BJ (cell line): ENCODE measurements at regions of chr12 and their contacts with region 1.

Region 1: GRCh38 chr12:54379401-54380201 is 4.9 kb downstream of the ZNF385A start:
- DNase-seq: no peak
- H3K4me3 ChIP-seq: peak overlapping the region; percentile 43
- H3K27me3 ChIP-seq: no peaks in the 10 kb centered on the region
- CTCF ChIP-seq: peak; percentile 100

Region 2: GRCh38 chr12:54220092-54220557 is 159.5 kb before region 1 on chr12:
- CTCF ChIA-PET with region 1: interaction called, 37 read pairs
- POLR2A ChIA-PET with region 1: no interaction called
- DNase-seq: peak; percentile 32
- H3K4me3 ChIP-seq: no peak overlapping the region
- H3K27me3 ChIP-seq: no peaks in the 10 kb centered on the region; the same call in 1 of the 2 replicates
- CTCF ChIP-seq: peak; percentile 88

Region 3: GRCh38 chr12:54337280-54337842 is 42.2 kb before region 1 on chr12:
- CTCF ChIA-PET with region 1: interaction called, 19 read pairs
- POLR2A ChIA-PET with region 1: no interaction called
- DNase-seq: no peak
- H3K4me3 ChIP-seq: no peak overlapping the region
- H3K27me3 ChIP-seq: no peaks in the 10 kb centered on the region
- CTCF ChIP-seq: peak; percentile 31; the same call in 1 of the 2 replicates

Region 4: DNA sequence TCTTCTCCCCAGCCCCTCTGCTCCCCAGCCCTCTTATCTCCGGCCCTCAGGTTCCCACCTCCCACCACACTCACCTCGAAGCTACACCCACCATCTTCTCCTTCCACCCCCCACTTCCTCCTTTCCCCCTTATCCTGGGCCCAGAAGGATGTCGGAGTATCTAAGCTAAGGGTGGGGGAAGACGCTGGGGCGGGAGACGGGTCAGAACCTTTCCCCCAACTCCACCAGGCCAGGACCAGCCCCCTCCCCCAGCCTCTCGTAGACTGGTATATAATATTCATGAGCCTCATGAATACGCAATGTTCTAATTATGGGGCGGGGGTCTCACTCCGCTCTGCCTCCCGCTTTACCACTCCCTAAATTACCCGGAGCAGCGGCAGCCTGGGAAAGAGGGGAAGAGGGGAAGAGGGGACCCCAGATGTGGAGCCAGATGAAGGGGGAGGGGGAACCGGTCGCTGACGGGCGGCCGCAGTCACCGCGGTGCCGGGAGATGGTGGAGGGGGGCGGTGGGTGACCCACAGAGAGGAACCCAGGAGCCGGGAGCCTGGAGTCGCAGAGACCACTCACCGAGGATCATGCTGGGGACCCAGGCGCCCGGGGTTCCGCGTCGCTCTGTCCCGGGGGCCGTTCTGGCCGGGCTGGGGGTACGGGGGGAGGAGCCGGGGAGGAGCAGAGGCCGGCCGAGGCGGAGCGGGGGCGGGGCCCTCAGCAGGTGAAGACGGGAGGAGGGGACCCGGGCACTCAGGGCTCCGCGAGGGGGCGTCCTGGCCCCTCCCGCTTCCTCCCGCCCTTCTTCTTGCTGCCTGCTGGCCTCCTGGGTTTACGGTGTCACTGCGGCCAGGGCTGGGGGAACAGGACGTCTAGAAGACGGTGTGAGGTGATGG is 11.3 kb after region 1 on chr12:
- CTCF ChIA-PET with region 1: interaction called, 53 read pairs
- POLR2A ChIA-PET with region 1: no interaction called
- DNase-seq: no peak
- H3K4me3 ChIP-seq: no peak overlapping the region
- H3K27me3 ChIP-seq: no peaks in the 10 kb centered on the region
- CTCF ChIP-seq: 0 out of 2 replicates have a peak, but pooled peaks have one; percentile 13

Region 5: GRCh38 chr12:54419088-54419892 is 39.7 kb after region 1 on chr12 and contains the start of gene ITGA5:
- CTCF ChIA-PET with region 1: interaction called, 20 read pairs
- POLR2A ChIA-PET with region 1: no interaction called
- DNase-seq: no peak
- H3K4me3 ChIP-seq: peak within 1 kb of the TSS; percentile 95
- H3K27me3 ChIP-seq: no peaks in the 10 kb centered on the region
- CTCF ChIP-seq: no peak
- polyA plus RNA-seq, gene ITGA5: 170 and 375 TPM in 2 replicates

Region 6: GRCh38 chr12:54535474-54535873 is 155.9 kb after region 1 on chr12:
- CTCF ChIA-PET with region 1: no interaction called
- POLR2A ChIA-PET with region 1: no interaction called
- DNase-seq: no peak
- H3K4me3 ChIP-seq: no peak overlapping the region
- H3K27me3 ChIP-seq: peaks cover 5% of the 10 kb centered on the region; the same call in 1 of the 2 replicates
- CTCF ChIP-seq: no peak